PC-9 (cell line): ENCODE measurements at regions of chr20 and their contacts with region 1.

Region 1: DNA sequence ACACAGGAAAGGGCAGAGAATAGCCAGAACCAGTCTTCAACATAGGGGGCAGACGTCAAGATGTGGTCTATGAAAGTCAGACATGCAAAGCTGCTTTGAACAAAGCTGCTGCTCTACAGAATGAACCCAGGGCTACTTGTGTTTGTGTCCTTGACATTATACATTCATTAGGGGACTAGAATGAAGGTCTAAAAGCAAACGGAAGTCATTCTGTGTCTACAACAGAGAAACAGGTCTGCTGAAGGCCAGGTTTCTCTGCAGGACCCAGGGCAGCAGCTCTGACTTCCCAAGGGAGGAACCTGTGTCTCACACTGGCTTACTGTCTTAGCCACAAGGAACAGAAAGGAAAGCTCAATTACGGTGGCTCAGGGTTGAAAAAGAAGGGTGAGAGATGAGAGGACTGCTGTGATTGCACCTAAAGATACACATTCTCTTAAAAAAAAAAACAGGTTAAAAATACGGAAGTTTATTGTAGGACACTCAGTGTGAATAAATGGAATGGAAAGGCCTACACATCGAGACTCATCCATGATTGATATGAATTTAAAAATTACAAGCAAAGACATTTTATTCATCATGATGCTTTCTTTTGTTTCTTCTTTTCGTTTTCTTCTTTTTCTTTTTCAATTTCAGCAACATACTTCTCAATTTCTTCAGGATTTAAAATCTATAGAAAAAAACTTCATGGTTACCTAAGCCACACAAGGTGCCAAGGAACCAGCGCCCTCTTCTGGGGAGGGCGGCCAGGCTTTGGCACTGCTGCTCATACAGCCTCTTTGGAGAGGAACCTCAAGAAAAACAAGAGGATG is 6.7 kb downstream of the PSMA7 start:
- DNase-seq: peak; percentile 64 to 68
- H3K4me3 ChIP-seq: no peak overlapping the region
- H3K27ac ChIP-seq: no peak overlapping the region
- H3K4me1 ChIP-seq: peaks cover 10% of the 10 kb centered on the region
- H3K27me3 ChIP-seq: no peaks in the 10 kb centered on the region
- CTCF ChIP-seq: peak; percentile 92

Region 2: GRCh38 chr20:62151835-62152364 is 15.4 kb after region 1 on chr20:
- CTCF ChIA-PET with region 1: interaction called, 23 read pairs
- POLR2A ChIA-PET with region 1: no interaction called
- intact Hi-C with region 1: no loop called
- DNase-seq: no peak
- H3K4me3 ChIP-seq: no peak overlapping the region
- H3K27ac ChIP-seq: no peak overlapping the region
- H3K4me1 ChIP-seq: peaks cover 27% of the 10 kb centered on the region
- H3K27me3 ChIP-seq: no peaks in the 10 kb centered on the region
- CTCF ChIP-seq: no peak

Region 3: GRCh38 chr20:62407221-62407992 is 270.9 kb after region 1 on chr20 and contains the start of gene CABLES2:
- CTCF ChIA-PET with region 1: no interaction called
- POLR2A ChIA-PET with region 1: no interaction called
- intact Hi-C with region 1: loop called (anchors 5 kb)
- DNase-seq: peak; percentile 85 to 96
- H3K4me3 ChIP-seq: peak within 1 kb of the TSS; percentile 72
- H3K27ac ChIP-seq: no peak within 1 kb of the TSS
- H3K4me1 ChIP-seq: peaks cover 18% of the 10 kb centered on the region
- H3K27me3 ChIP-seq: no peaks in the 10 kb centered on the region
- CTCF ChIP-seq: peak; percentile 35; the same call in 1 of the 2 replicates
- total RNA-seq, gene CABLES2: 11.2 and 14.1 TPM in 2 replicates